ENCODE measurements at regions of chr19 and their contacts with region 1.

Region 1: DNA sequence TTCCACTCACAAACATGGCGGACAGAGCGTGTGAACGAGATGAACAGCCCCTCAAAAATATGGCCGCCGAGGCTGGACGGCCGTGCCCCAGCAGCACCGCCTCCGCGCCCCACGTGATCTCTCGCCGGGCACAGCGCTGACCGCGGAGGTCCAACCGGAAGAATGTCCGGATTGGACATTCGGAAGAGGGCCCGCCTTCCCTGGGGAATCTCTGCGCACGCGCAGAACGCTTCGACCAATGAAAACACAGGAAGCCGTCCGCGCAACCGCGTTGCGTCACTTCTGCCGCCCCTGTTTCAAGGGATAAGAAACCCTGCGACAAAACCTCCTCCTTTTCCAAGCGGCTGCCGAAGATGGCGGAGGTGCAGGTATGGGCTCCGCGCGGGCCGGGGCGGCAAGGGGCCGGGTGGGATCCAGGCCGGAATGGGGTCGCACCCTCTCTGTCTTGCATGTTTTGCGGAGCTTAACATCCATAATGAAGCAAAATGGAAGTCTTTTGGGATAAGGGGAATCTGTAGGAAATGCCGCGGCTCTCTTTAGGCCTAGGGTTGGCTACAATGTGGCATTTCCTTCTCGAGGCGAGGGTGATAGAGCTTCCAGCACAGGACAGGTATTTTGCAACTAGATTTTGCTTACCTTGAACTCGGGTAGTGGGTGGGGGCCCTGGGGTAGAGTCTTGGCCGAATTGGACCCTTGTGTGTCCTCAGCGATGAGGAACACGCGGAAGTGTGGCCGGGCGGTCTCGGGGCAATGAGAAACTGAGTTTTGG is at the start of gene RPL13A:
- DNase-seq: peak; percentile 99 to 100 (median 99)
- ATAC-seq: peak; percentile 85
- H3K4me3 ChIP-seq: peak within 1 kb of the TSS; percentile 93 to 96
- H3K4me3 Mint-ChIP-seq: peak within 1 kb of the TSS; percentile 97
- H3K27ac ChIP-seq: peak within 1 kb of the TSS; percentile 91
- H3K27ac Mint-ChIP-seq: peak within 1 kb of the TSS; percentile 92
- H3K4me1 ChIP-seq: peaks cover 39% of the 10 kb centered on the region
- H3K4me1 Mint-ChIP-seq: peaks cover 50% of the 10 kb centered on the region
- H3K27me3 ChIP-seq: no peaks in the 10 kb centered on the region
- H3K27me3 Mint-ChIP-seq: no peaks in the 10 kb centered on the region
- CTCF ChIP-seq: no peak
- total RNA-seq, gene RPL13A: 5,165 to 5,323 TPM

Region 2: DNA sequence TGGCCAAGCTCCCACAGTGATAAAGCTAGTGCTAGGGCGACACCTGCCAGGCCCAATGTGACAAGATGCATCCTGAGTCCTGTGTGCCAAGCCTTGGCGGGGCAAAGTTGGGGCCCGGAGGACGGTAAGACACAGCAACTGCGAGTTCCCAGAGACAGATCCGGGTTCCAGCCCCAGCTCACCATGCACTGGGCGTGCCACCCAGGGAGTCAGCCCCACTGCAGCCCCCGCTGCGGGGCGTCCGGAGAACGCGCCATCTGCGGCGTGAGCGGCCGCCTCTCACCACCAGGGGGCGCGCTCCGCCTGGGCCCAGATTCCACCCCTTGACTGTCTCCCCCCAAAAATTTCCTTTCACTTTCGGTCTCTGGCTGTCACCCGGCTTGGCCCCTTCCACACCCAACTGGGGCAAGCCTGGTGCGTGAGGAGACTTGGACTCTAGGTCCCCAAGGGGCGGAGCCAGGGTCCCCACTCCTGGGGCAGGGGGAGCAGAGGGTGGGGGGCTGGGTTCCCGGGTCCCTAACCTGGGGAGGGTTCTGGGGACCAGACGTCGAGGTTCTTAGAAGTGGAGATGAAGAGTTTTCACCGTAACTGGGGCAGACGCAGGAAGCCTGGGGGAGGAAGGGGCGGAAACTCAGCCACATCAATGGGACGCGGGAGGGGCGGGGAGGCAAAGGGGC is 13.5 kb before region 1 on chr19 and contains the start of gene FLT3LG:
- CTCF ChIA-PET with region 1: interaction called, 19 read pairs
- POLR2A ChIA-PET with region 1: interaction called, 14 read pairs
- intact Hi-C with region 1: loop called (anchors 1 kb)
- DNase-seq: peak; percentile 83 to 97 (median 91)
- ATAC-seq: peak; percentile 58
- H3K4me3 ChIP-seq: peak within 1 kb of the TSS; percentile 88 to 98
- H3K4me3 Mint-ChIP-seq: peak within 1 kb of the TSS; percentile 91
- H3K27ac ChIP-seq: peak within 1 kb of the TSS; percentile 92 to 96
- H3K27ac Mint-ChIP-seq: peak within 1 kb of the TSS; percentile 98
- H3K4me1 ChIP-seq: peaks cover 53% of the 10 kb centered on the region
- H3K4me1 Mint-ChIP-seq: peaks cover 54% of the 10 kb centered on the region
- H3K27me3 ChIP-seq: no peaks in the 10 kb centered on the region
- H3K27me3 Mint-ChIP-seq: no peaks in the 10 kb centered on the region
- CTCF ChIP-seq: peak; percentile 83
- total RNA-seq, gene FLT3LG: 246 to 259 TPM

Region 3: DNA sequence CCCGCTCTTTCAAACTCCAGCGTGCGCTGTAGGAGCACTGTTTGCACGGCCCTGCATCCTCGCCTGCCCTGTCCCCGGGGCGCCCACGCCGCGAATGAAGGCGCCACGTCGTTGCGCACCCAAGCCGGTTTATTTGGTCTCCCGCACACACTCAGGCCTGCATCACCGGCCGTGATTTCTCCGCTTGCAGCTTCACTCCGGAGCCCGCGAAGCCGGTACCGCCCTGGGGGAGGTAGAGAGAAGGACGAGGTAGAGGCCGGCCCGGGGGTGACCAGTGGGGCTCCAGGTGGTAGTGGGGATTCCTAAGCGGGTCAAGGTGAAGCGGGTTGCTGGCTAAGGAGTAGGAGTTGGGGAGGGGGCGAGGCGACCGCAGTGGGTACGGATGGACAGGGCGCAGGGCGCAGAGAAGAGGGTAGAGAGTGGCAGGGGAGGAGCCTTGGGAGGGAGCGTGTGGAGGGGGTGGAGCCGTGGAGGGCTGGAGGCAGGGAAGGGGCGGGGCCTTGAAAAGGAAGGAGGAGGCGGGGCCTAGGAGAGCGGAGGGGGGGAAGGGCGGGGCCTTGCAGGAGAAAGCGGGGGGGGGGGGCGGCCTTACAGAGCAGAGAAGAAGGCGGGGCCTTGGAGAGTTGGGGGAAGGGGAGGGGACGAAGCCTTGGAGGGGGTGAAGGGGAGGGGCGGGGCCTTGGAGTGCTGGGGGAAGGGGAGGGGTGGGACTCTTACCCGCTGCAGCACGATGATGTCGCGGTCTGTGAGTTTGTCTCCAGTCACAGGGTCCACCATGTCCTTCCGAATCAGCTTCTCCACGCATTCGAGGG is 68.3 kb after region 1 on chr19:
- CTCF ChIA-PET with region 1: interaction called, 3 read pairs
- POLR2A ChIA-PET with region 1: interaction called, 10 read pairs
- intact Hi-C with region 1: no loop called
- DNase-seq: peak; percentile 66 to 90 (median 77)
- ATAC-seq: peak; percentile 75
- H3K4me3 ChIP-seq: peak overlapping the region; percentile 59 to 78
- H3K4me3 Mint-ChIP-seq: peak overlapping the region; percentile 58
- H3K27ac ChIP-seq: peak overlapping the region; percentile 28 to 34
- H3K27ac Mint-ChIP-seq: peak overlapping the region; percentile 95
- H3K4me1 ChIP-seq: peaks cover 88% of the 10 kb centered on the region
- H3K4me1 Mint-ChIP-seq: peaks cover 74% of the 10 kb centered on the region
- H3K27me3 ChIP-seq: no peaks in the 10 kb centered on the region
- H3K27me3 Mint-ChIP-seq: no peaks in the 10 kb centered on the region
- CTCF ChIP-seq: no peak